CD8-positive, alpha-beta T cell (primary cell): ENCODE measurements at regions of chr2 and their contacts with region 1.

Region 1: GRCh38 chr2:8803658-8804379 is 33.6 kb downstream of the KIDINS220 start:
- DNase-seq: no peak
- ATAC-seq: no peak
- H3K4me3 ChIP-seq: no peak overlapping the region
- H3K4me3 Mint-ChIP-seq: no peak overlapping the region
- H3K27ac ChIP-seq: no peak overlapping the region
- H3K27ac Mint-ChIP-seq: no peak overlapping the region
- H3K4me1 ChIP-seq: no peaks in the 10 kb centered on the region
- H3K4me1 Mint-ChIP-seq: no peaks in the 10 kb centered on the region
- H3K27me3 ChIP-seq: no peaks in the 10 kb centered on the region
- H3K27me3 Mint-ChIP-seq: no peaks in the 10 kb centered on the region
- CTCF ChIP-seq: no peak

Region 2: GRCh38 chr2:8790739-8791162 is 13.1 kb before region 1 on chr2:
- CTCF ChIA-PET with region 1: interaction called, 3 read pairs
- POLR2A ChIA-PET with region 1: no interaction called
- intact Hi-C with region 1: loop called in 1 of 2 experiments (anchors 2 kb)
- DNase-seq: no peak
- ATAC-seq: no peak
- H3K4me3 ChIP-seq: no peak overlapping the region
- H3K4me3 Mint-ChIP-seq: no peak overlapping the region
- H3K27ac ChIP-seq: no peak overlapping the region
- H3K27ac Mint-ChIP-seq: no peak overlapping the region
- H3K4me1 ChIP-seq: no peaks in the 10 kb centered on the region
- H3K4me1 Mint-ChIP-seq: no peaks in the 10 kb centered on the region
- H3K27me3 ChIP-seq: no peaks in the 10 kb centered on the region
- H3K27me3 Mint-ChIP-seq: no peaks in the 10 kb centered on the region
- CTCF ChIP-seq: no peak

Region 3: GRCh38 chr2:8821276-8822217 is 17.7 kb after region 1 on chr2:
- CTCF ChIA-PET with region 1: no interaction called
- POLR2A ChIA-PET with region 1: no interaction called
- intact Hi-C with region 1: no loop called
- DNase-seq: no peak
- ATAC-seq: no peak
- H3K4me3 ChIP-seq: no peak overlapping the region
- H3K4me3 Mint-ChIP-seq: no peak overlapping the region
- H3K27ac ChIP-seq: no peak overlapping the region
- H3K27ac Mint-ChIP-seq: no peak overlapping the region
- H3K4me1 ChIP-seq: no peaks in the 10 kb centered on the region
- H3K4me1 Mint-ChIP-seq: peaks cover 2% of the 10 kb centered on the region
- H3K27me3 ChIP-seq: no peaks in the 10 kb centered on the region
- H3K27me3 Mint-ChIP-seq: no peaks in the 10 kb centered on the region
- CTCF ChIP-seq: no peak